PC-9 (cell line): ENCODE measurements at regions of chr12 and their contacts with region 1.

Region 1: DNA sequence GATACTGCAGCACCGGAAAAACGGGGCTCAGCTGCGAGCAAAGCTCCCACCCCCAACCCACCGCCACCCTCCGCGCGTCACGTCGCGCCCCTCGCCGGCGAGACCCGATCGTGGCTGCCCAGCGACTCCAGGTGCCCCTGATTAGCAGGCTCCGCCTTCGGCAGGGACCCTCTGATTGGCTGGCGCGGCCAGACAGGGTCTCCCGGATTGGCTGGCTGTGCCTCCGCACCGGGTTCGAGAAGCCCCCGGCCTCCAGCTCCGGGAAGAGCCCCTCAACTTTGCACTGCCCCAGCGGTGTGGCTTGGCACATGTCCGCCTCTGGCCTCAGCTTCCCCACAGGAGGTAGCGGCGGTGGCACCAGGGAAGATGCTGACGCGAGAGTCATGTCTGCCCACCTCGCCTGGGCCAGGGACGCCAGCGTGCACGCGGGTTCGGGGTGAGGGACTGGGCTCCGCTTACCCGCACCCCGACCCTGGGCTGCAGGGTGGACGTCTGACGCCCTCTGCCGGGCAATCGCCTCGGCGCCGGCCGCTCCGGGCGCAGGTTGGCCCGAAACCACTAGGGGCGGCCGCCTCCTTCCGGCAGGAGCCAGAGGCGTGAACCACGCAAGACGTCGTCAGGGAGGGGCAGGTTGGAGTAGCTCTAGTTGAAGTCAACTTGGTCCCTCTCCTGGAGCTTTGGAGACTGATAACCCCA is 498 bp upstream of the RHOF start:
- DNase-seq: peak; percentile 82 to 98
- H3K4me3 ChIP-seq: peak overlapping the region; percentile 79
- H3K27ac ChIP-seq: peak overlapping the region; percentile 100
- H3K4me1 ChIP-seq: peaks cover 71% of the 10 kb centered on the region
- H3K27me3 ChIP-seq: no peaks in the 10 kb centered on the region
- CTCF ChIP-seq: peak; percentile 87

Region 2: DNA sequence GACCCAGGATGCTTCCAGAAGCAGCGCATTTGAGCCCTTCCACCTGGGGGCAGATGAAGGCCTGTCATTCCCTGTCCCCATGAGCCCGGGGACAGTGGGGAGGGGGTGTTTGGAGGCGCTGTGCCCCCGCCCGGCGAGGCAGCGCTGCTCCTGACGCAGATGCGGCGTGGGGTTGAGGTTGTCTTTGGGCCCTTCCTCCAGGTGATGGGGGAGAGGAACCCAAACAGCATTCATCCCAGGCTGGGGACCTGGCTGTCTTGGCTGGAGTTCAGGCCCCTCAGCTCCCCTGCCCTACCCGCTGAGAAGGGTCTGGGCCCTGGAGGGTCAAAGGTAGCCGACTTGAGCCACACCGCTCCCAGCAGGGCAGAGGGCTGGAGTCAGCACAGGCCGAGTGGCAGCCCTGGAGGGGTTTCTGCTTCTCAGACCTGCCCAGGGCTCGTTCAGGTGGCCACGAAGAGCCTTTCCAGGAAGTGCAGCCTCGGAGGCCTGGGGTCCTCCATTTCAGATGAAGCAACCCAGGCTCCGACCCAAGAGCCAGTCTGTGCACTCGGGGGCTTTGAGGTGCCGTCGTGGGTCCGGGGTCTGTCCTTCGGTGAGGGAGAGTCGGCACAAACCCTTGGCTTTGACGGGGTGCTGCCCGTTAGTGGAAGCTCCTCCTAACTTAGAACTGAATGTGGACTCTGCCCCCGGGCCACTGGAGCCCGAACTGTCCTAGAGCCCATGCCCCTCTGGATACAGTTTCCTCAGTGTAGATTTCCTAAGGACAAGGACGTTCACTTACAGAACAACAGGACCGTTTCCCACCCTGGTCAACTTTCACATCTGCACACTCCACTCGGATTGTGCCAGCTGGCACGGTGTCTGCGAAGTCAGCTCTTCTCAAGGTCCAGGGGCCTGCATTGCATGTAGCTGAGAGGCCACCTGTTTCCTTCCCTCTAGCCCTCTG is 1052.2 kb before region 1 on chr12:
- CTCF ChIA-PET with region 1: no interaction called
- POLR2A ChIA-PET with region 1: no interaction called
- intact Hi-C with region 1: no loop called
- DNase-seq: no peak
- H3K4me3 ChIP-seq: no peak overlapping the region
- H3K27ac ChIP-seq: no peak overlapping the region
- H3K4me1 ChIP-seq: no peaks in the 10 kb centered on the region
- H3K27me3 ChIP-seq: no peaks in the 10 kb centered on the region
- CTCF ChIP-seq: no peak

Region 3: DNA sequence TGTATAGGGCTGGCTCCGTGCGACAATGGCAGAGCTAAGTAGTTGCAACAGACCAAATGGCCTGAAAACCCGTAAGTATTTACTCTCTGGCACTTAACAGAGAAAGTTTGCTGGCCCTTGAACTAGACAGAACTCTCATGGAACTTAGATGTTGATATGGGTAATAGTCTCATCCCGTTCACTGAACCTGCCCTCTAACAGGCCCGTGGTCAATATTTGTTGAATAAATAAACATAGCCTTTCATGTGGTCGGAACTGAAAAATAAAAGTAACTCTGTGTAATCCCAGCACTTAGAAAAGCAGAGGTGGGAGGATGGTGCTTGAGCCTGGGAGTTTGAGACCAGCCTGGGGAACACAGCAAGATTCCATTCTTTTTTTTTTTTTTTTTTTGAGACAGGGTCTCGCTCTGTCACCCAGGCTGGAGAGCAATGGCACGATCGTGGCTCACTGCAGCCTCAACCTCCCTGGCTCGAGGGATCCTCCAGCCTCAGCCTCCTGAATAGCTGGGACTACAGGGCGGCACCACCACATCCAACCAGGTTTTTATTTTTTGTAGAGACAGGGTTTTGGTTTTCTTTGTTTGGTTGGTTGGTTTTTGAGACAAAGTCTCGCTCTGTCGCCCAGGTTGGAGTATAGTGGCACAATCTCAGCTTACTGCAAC is 242.9 kb before region 1 on chr12:
- CTCF ChIA-PET with region 1: interaction called, 32 read pairs
- POLR2A ChIA-PET with region 1: no interaction called
- intact Hi-C with region 1: loop called (anchors 10 kb)
- DNase-seq: no peak
- H3K4me3 ChIP-seq: no peak overlapping the region
- H3K27ac ChIP-seq: no peak overlapping the region
- H3K4me1 ChIP-seq: no peaks in the 10 kb centered on the region
- H3K27me3 ChIP-seq: no peaks in the 10 kb centered on the region
- CTCF ChIP-seq: no peak

Region 4: GRCh38 chr12:121668750-121669520 is 125.1 kb before region 1 on chr12:
- CTCF ChIA-PET with region 1: no interaction called
- POLR2A ChIA-PET with region 1: no interaction called
- intact Hi-C with region 1: no loop called
- DNase-seq: peak in 1 of 2 experiments; percentile 18
- H3K4me3 ChIP-seq: no peak overlapping the region
- H3K27ac ChIP-seq: no peak overlapping the region
- H3K4me1 ChIP-seq: peaks cover 42% of the 10 kb centered on the region
- H3K27me3 ChIP-seq: no peaks in the 10 kb centered on the region
- CTCF ChIP-seq: peak; percentile 62; the same call in 1 of the 2 replicates

Region 5: DNA sequence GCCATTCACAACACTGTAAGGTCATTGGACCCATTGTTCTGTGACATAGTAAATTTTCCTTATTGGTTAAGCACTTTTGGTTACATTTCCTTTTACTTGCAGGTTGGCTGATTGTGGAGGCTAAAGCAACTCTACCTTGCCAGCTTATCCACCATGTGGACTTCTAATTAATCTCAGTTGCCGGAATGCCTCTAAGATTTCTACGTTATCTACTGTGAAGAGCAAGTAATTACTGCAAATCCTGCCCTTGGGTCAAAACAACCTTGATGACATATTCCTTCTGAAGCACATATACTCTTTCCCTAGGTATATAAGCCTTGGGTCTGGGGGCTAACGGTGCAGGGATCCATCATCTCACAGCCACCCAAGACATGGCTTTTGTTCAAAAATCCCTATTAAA is 105.0 kb before region 1 on chr12:
- CTCF ChIA-PET with region 1: interaction called, 10 read pairs
- POLR2A ChIA-PET with region 1: interaction called, 4 read pairs
- intact Hi-C with region 1: loop called (anchors 2 kb)
- DNase-seq: no peak
- H3K4me3 ChIP-seq: no peak overlapping the region
- H3K27ac ChIP-seq: no peak overlapping the region
- H3K4me1 ChIP-seq: peaks cover 4% of the 10 kb centered on the region; the same call in 1 of the 2 replicates
- H3K27me3 ChIP-seq: no peaks in the 10 kb centered on the region
- CTCF ChIP-seq: no peak

Region 6: DNA sequence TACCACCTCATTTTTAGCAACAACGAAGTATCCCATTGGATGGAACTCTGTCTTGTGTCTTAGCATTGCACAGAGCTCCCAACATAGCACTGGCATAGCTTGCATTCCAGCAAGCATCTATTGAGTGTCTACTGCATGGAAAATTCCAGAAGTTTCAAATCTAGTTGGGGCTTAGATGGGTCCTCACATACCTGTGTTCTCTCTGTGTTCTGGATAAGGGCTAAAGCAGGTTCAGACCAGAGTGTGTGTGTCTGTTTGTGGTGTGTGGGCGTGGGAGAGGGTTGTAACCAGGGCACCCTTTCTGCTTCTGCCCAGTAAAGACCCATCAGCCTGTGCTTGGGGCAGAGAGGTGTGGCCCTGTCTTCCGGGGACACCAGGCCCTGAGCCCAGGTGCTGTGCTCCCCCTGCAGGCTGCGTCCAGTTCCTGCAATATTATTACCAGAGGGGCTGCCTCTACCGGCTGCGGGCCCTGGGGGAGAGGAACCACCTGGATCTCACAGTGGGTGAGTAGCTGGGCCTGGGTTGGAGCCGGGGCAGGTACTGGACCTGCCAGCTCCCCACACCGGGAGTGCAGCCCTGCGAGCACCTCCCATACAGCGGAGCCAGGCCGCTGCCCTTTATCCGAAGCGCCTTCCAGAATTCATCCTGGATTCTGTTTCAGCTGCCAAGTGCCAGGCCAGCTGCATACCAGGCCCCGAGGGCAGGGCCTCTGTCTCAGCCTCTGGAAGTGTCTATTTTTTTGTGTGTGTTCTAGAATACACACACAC is 20.8 kb before region 1 on chr12:
- CTCF ChIA-PET with region 1: interaction called, 9 read pairs
- POLR2A ChIA-PET with region 1: interaction called, 37 read pairs
- intact Hi-C with region 1: loop called (anchors 1 kb)
- DNase-seq: peak; percentile 70 to 80
- H3K4me3 ChIP-seq: no peak overlapping the region
- H3K27ac ChIP-seq: no peak overlapping the region
- H3K4me1 ChIP-seq: peaks cover 20% of the 10 kb centered on the region
- H3K27me3 ChIP-seq: no peaks in the 10 kb centered on the region
- CTCF ChIP-seq: peak; percentile 86

Region 7: DNA sequence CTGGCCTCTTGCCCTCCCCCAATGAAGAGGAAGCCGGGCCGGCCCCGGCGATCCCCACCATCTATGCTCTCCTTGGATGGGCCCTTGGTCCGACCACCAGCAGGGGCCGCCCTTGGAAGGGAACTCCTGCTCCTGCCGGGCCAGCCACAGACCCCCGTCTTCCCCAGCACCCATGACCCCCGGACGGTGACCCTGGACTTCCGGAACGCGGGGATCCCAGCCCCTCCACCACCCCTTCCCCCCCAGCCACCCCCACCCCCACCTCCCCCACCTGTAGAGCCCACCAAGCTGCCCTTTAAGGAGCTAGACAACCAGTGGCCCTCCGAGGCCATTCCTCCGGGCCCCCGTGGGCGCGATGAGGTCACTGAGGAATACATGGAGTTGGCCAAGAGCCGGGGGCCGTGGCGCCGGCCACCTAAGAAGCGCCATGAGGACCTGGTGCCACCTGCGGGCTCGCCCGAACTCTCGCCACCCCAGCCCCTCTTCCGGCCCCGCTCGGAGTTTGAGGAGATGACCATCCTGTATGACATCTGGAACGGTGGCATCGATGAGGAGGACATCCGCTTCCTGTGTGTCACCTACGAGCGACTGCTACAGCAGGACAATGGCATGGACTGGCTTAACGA is 29.2 kb after region 1 on chr12:
- CTCF ChIA-PET with region 1: no interaction called
- POLR2A ChIA-PET with region 1: no interaction called
- intact Hi-C with region 1: no loop called
- DNase-seq: no peak
- H3K4me3 ChIP-seq: no peak overlapping the region
- H3K27ac ChIP-seq: no peak overlapping the region
- H3K4me1 ChIP-seq: no peaks in the 10 kb centered on the region
- H3K27me3 ChIP-seq: no peaks in the 10 kb centered on the region
- CTCF ChIP-seq: no peak

Region 8: DNA sequence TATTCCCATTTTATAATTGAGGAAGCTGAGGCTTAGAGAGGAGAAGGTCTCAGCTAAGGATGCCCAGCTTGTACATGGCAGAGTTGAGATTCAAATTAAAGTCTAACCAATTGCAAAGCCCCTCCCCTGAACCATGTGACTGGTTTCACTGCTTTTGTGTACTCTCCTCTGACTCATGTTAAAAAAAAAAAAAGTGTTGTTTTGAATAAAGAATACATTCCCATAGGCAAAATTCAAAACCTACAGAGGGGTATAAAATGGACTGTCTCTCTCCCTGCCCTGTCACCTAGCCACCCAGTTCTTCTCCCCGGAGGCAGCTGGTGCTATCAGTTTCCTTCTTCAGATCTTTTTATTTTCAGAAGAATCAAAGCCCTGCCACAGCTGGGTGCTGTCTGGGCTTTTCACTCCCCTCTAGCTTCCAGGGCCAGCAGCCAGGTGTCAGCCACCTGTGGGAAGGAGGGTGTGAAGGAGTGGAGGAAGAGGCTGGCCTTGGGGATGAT is 100.0 kb after region 1 on chr12:
- CTCF ChIA-PET with region 1: interaction called, 18 read pairs
- POLR2A ChIA-PET with region 1: no interaction called
- intact Hi-C with region 1: no loop called
- DNase-seq: peak; percentile 34 to 80
- H3K4me3 ChIP-seq: no peak overlapping the region
- H3K27ac ChIP-seq: peak overlapping the region; percentile 49; the same call in 1 of the 2 replicates
- H3K4me1 ChIP-seq: peaks cover 28% of the 10 kb centered on the region
- H3K27me3 ChIP-seq: no peaks in the 10 kb centered on the region
- CTCF ChIP-seq: no peak

Region 9: GRCh38 chr12:122137681-122138080 is 343.7 kb after region 1 on chr12:
- CTCF ChIA-PET with region 1: no interaction called
- POLR2A ChIA-PET with region 1: no interaction called
- intact Hi-C with region 1: no loop called
- DNase-seq: no peak
- H3K4me3 ChIP-seq: no peak overlapping the region
- H3K27ac ChIP-seq: no peak overlapping the region
- H3K4me1 ChIP-seq: no peaks in the 10 kb centered on the region
- H3K27me3 ChIP-seq: no peaks in the 10 kb centered on the region
- CTCF ChIP-seq: no peak

Region 10: GRCh38 chr12:122190842-122191668 is 397.1 kb after region 1 on chr12:
- CTCF ChIA-PET with region 1: no interaction called
- POLR2A ChIA-PET with region 1: no interaction called
- intact Hi-C with region 1: loop called (anchors 2 kb)
- DNase-seq: peak; percentile 57 to 77
- H3K4me3 ChIP-seq: no peak overlapping the region
- H3K27ac ChIP-seq: no peak overlapping the region
- H3K4me1 ChIP-seq: no peaks in the 10 kb centered on the region
- H3K27me3 ChIP-seq: no peaks in the 10 kb centered on the region
- CTCF ChIP-seq: peak; percentile 82